ENCODE measurements at regions of chr17 and their contacts with region 1.

Region 1: DNA sequence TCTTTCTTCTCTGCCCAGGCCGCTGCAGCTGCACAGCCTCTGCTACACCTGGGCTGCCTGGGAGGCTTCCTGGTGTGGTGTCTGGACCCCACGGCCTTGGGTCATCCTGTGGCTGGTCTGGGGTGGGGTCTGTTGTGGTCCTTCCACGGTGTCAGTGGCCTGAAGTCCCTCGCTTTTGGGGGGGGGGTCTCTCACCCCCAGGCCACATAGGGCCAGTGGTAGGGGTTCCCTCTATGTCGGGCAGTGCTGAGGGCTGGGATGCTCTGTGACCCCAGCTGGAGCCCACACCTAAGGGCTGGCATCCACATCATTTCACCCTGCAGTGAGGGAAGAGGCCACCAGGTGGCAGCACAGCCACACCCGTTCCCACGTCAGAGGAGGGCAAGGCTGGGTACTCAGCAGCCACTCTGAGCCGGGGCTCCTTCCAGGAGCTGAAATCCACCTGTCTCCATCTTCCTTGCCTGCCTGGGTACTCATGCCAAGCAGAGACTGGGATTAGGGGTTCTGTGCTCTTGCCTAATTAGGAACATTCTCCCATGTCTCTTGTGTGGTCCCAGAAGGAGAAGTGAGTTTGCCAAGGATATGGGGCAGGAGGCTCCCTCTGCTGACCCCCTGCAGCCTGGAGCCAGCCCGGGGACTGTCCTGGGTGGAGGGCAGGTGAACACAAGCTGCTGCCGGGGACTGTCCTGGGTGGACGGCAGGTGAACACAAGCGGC is 13.0 kb downstream of the ENGASE start:
- DNase-seq: peak; percentile 61 to 89 (median 75)
- H3K4me3 ChIP-seq: no peak overlapping the region
- H3K27ac ChIP-seq: no peak overlapping the region
- H3K4me1 ChIP-seq: no peaks in the 10 kb centered on the region
- H3K27me3 ChIP-seq: peaks cover 12% of the 10 kb centered on the region
- CTCF ChIP-seq: peak; percentile 79 to 92 (median 90)
- POLR2A ChIP-seq: no peak

Region 2: GRCh38 chr17:79393358-79394202 is 306.0 kb after region 1 on chr17:
- intact Hi-C with region 1: loop called (anchors 5 kb)
- DNase-seq: peak; percentile 69 to 92 (median 82)
- H3K4me3 ChIP-seq: no peak overlapping the region
- H3K27ac ChIP-seq: no peak overlapping the region
- H3K4me1 ChIP-seq: no peaks in the 10 kb centered on the region
- H3K27me3 ChIP-seq: peaks cover 53% of the 10 kb centered on the region
- CTCF ChIP-seq: peak; percentile 86 to 93 (median 88)
- POLR2A ChIP-seq: no peak

Region 3: DNA sequence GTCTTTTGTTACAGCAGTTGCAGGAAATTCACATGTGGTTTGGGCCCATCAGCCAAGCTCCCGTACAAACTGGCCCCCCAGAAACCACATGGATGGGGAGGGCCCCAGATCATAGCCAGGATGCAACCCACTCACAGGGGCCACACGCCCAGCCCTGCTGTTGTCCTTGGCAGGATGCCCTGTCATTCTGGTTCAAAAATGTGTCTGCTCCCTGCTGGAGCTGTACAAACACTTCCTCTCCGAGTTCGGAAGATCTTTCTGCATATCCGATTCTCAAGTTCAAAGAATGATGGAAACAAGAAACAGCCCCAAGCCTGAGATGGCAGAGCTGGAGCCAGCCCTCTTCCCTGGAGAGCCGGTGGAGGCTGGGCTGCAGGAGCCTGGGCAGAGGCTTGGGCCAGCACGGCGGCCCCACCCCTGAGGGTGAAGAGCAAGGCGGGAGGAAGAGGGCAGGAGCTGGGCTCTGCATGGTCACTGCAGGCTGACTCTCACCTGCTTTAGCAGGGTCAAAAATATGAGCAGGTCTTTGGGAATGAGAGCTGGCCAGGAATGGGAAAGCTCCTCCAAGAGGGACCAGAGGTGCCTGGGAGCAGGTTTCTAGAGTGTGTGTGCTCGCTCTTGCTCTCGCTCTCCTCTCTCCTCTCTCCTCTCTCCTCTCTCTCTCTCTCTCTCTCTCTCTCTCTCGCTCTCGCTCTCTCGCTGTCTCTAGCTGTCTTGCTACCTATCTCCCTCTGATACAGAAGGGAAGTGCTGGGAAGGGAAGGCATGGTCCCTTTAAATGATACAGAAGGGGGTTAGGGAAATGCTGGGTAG is 608.4 kb after region 1 on chr17:
- intact Hi-C with region 1: loop called in 1 of 2 experiments (anchors 10 kb)
- DNase-seq: peak in 3 of 7 donors; percentile 14 to 33 (median 32)
- H3K4me3 ChIP-seq: no peak overlapping the region
- H3K27ac ChIP-seq: peak overlapping the region in 1 of 5 donors; percentile 34
- H3K4me1 ChIP-seq: peaks cover 0 to 8% of the 10 kb centered on the region in 2 donors
- H3K27me3 ChIP-seq: no peaks in the 10 kb centered on the region
- CTCF ChIP-seq: no peak
- POLR2A ChIP-seq: no peak